Aorta (tissue), 5 donors: ENCODE measurements at regions of chr3 and their contacts with region 1.

Region 1: GRCh38 chr3:169744366-169745054 is 20.4 kb downstream of the TERC start:
- DNase-seq: no peak
- ATAC-seq: no peak
- H3K4me3 ChIP-seq: no peak overlapping the region
- H3K27ac ChIP-seq: no peak overlapping the region
- H3K4me1 ChIP-seq: no peaks in the 10 kb centered on the region
- H3K27me3 ChIP-seq: no peaks in the 10 kb centered on the region

Region 2: GRCh38 chr3:169041677-169042171 is 702.8 kb before region 1 on chr3:
- intact Hi-C with region 1: loop called (anchors 10 kb)
- DNase-seq: no peak
- ATAC-seq: peak; percentile 79
- H3K4me3 ChIP-seq: no peak overlapping the region
- H3K27ac ChIP-seq: no peak overlapping the region
- H3K4me1 ChIP-seq: no peaks in the 10 kb centered on the region
- H3K27me3 ChIP-seq: no peaks in the 10 kb centered on the region

Region 3: GRCh38 chr3:169686874-169687273 is 57.6 kb before region 1 on chr3:
- intact Hi-C with region 1: no loop called
- DNase-seq: no peak
- ATAC-seq: no peak
- H3K4me3 ChIP-seq: no peak overlapping the region
- H3K27ac ChIP-seq: no peak overlapping the region
- H3K4me1 ChIP-seq: no peaks in the 10 kb centered on the region
- H3K27me3 ChIP-seq: no peaks in the 10 kb centered on the region

Region 4: DNA sequence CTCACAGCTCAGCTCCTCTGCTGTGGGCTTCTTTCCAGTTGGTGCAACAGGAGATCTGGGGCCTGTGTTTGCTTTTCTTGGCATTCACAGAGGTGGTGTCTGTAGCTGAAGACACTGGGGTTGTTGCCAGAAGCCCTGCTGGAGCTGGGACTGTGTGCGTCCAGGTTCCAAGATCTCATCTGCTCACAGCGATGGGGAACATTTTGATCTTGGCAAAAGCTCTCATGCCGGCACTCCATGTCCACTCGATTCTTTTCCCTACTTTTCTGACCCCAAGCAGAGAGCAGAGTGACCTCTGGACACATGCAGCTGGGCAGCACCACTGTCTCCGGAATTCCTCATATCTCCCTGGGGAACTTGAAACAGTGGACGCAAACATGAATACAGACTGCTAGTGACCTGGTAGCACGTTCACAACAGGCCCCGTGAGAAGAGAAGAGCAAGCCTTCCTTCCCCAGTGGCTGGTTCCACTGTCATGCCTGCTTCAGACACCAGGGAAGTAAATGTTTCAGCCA is 44.9 kb before region 1 on chr3:
- intact Hi-C with region 1: no loop called
- DNase-seq: peak in 1 of 2 donors; percentile 53
- ATAC-seq: peak; percentile 84
- H3K4me3 ChIP-seq: no peak overlapping the region
- H3K27ac ChIP-seq: no peak overlapping the region
- H3K4me1 ChIP-seq: no peaks in the 10 kb centered on the region
- H3K27me3 ChIP-seq: no peaks in the 10 kb centered on the region

Region 5: GRCh38 chr3:170465955-170466354 is 721.4 kb after region 1 on chr3:
- intact Hi-C with region 1: no loop called
- DNase-seq: no peak
- ATAC-seq: no peak
- H3K4me3 ChIP-seq: no peak overlapping the region
- H3K27ac ChIP-seq: no peak overlapping the region
- H3K4me1 ChIP-seq: no peaks in the 10 kb centered on the region
- H3K27me3 ChIP-seq: no peaks in the 10 kb centered on the region